Lower leg skin (tissue), 4 donors: ENCODE measurements at regions of chr12 and their contacts with region 1.

Region 1: DNA sequence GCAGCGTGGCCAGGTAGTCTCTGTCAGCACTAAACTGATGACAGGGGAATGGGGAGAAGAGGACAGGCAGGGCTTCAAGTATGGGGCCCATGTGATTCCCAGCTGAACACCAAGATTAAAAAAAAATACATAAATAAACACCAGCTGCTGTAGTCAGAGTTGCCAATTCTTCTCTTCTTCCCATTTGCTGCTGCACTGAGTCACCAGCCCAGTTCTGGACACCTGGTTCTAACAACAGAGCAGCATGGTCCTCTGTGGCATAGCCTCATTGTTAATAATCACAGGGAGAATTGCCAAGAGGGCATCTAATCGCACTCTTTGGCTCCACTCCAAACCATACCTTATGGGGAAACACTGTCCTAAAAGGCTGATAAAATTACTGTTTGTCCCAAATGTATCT is 15.1 kb downstream of the PPM1H start:
- DNase-seq: no peak
- H3K4me3 ChIP-seq: no peak overlapping the region
- CTCF ChIP-seq: no peak
- POLR2A ChIP-seq: no peak

Region 2: DNA sequence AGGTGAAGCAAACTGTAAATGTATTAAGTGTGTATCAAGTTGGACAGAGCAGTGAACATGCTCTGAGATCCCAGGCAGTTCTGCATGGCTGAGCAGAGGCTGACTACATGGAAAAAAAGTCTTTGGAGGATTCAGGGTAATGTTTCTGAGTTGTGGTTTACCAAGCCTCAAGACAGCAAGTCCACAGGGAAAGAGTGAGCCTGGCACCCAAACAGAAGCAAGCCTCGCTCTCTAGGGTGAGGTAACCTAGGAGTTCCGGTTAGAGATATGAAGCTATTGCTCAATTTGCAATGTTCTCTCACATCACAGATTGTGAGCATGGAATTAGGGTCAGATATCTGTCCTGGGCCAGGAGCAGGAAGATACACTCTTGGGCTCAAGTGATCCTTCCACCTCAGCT is 294.6 kb before region 1 on chr12:
- intact Hi-C with region 1: no loop called
- DNase-seq: no peak
- H3K4me3 ChIP-seq: no peak overlapping the region
- CTCF ChIP-seq: no peak
- POLR2A ChIP-seq: no peak

Region 3: GRCh38 chr12:63897931-63898330 is 978.1 kb after region 1 on chr12:
- intact Hi-C with region 1: no loop called
- DNase-seq: no peak
- H3K4me3 ChIP-seq: no peak overlapping the region
- CTCF ChIP-seq: no peak
- POLR2A ChIP-seq: no peak

Region 4: DNA sequence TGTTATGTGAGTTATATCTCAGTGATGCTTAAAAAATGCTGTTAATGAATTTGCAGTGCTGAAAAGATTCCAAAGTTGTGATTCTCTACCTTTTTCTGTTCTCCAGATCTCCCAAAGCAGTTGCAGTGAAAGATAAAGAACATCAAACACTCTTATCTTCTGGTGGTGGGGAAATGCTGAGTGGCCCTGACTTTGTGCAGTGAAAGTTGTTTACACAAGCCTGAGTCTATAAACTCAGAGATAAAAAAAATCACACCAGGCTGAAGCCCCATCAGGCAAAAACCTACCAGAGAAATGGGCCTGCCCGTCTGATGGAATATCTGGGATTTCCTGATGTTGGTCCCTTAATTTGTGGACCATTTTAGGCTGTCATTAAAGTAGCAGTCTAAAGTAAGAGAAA is 1736.6 kb after region 1 on chr12:
- intact Hi-C with region 1: loop called (anchors 5 kb)
- DNase-seq: no peak
- H3K4me3 ChIP-seq: no peak overlapping the region
- CTCF ChIP-seq: no peak
- POLR2A ChIP-seq: no peak